ENCODE measurements at regions of chr9 and their contacts with region 1.

Region 1: DNA sequence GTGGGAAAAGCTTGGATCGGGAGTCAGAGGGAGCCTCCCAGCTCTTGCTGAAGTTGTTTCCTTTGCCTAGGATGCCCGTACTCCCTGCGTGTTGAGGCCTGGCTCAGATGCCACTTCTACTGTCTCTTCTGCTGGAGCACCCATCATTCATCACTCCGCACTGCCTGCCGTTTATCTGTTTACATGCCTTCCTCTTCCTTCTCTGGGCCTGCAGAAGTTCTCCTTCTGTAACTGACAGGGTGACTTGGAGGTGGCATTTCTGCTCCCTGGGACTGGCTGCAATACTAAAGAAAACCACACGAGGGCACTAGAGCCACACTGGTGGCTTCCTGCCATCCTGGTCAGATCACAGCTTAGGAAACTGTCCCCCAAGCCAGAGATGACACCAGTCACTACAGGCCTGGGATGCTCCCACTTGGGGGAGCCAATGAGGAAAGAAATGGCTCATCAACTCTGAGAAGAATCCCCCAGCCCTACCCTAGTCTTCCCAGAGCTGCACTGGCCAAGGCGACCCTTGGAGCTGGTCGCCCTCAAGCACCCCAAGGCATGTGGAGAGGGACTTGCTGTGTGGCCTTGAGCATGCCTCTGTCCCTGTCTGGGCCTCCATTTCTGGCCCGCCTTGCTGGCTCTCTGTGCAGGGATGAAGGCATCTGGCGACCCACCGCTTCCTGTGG is 9.7 kb upstream of the SLC25A51 start:
- DNase-seq: peak in 2 of 3 donors; percentile 88 to 92
- ATAC-seq: peak; percentile 94
- H3K4me3 ChIP-seq: no peak overlapping the region
- H3K4me1 ChIP-seq: no peaks in the 10 kb centered on the region
- CTCF ChIP-seq: peak; percentile 96

Region 2: DNA sequence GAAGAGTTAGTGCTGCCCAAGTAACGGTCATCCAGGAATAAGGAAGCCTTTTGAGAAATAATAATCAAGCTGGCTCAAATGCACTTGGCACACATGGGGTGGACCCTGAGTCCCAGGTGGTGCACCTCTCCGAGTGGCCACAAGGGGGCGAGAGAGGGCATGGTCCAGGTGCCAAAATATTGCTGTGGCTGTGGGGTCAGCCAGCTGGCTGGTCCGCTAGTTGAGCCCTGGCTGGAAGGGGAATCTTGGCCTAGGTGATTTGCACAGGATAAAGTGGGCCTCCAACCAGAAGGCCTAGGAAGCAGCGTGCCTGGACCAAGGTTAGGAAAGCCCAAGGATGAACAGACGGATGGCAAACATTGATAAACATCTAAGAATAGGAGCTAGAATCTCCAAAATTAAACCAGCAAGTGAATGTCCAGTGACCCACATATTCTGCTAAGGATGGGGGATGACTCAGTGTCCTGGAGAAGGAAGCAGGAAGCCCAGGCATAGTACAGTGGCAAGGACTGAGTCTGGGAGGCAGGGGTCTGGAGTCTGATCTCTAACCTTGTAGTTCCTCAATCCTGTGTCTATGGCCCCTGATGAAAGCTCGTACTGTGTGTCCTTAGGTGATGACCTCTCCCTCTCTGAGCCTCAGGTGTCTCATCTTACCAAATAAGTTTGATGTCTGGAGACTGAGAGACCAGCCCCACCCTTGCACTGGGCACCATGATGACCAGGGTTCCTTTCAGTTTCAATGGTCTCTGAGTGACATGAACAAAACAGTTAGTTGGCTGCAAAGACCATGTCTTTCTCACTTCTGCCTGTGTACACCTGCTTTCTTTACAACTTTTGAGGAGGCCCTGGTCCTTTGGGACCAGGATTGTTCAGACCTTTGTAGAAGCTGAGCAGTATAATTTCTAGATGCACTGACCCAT is 174.6 kb after region 1 on chr9:
- intact Hi-C with region 1: loop called in 1 of 2 experiments (anchors 10 kb)
- DNase-seq: peak; percentile 66 to 86 (median 86)
- ATAC-seq: peak; percentile 91
- H3K4me3 ChIP-seq: no peak overlapping the region
- H3K4me1 ChIP-seq: no peaks in the 10 kb centered on the region
- CTCF ChIP-seq: peak; percentile 97

Region 3: DNA sequence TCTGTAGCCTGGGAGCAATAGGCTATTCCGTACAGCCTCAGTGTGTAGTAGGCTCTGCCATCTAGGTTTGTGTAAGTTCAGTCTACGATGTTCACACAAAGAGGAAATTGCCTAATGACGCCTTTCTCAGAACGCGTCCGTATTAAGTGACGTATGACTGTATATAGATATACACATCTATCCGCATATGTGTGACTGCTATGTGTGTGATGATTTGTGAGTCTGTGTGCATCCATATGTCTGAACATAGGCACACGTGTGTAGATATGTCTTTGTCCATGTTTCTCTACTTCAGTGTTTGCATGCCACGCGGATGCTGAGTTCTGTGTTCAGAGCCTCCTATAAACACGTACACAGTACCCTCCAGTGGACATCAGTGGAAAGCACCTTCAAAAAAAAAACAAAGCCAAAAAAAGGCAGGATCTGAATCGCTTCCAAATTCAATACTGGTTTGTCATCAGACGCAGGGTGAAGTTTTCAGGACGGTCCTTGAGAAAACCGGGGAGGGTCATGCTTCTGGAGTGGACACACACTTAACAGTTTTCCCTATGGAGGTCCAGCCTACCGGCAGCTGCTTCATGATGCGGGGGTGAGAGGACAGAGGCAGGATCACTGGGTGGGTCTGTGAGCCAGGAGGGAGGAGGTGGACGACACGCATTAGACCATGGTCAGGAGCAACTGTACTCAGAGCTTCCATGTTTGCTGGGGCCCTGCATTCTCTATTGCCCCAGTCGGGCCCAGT is 449.4 kb after region 1 on chr9:
- intact Hi-C with region 1: loop called in 1 of 2 experiments (anchors 5 kb)
- DNase-seq: peak in 1 of 3 donors; percentile 37
- ATAC-seq: peak; percentile 81
- H3K4me3 ChIP-seq: no peak overlapping the region
- H3K4me1 ChIP-seq: no peaks in the 10 kb centered on the region
- CTCF ChIP-seq: no peak

Measured in mucosa of descending colon (tissue), 3 donors.